ENCODE measurements at regions of chr17 and their contacts with region 1.

Region 1: DNA sequence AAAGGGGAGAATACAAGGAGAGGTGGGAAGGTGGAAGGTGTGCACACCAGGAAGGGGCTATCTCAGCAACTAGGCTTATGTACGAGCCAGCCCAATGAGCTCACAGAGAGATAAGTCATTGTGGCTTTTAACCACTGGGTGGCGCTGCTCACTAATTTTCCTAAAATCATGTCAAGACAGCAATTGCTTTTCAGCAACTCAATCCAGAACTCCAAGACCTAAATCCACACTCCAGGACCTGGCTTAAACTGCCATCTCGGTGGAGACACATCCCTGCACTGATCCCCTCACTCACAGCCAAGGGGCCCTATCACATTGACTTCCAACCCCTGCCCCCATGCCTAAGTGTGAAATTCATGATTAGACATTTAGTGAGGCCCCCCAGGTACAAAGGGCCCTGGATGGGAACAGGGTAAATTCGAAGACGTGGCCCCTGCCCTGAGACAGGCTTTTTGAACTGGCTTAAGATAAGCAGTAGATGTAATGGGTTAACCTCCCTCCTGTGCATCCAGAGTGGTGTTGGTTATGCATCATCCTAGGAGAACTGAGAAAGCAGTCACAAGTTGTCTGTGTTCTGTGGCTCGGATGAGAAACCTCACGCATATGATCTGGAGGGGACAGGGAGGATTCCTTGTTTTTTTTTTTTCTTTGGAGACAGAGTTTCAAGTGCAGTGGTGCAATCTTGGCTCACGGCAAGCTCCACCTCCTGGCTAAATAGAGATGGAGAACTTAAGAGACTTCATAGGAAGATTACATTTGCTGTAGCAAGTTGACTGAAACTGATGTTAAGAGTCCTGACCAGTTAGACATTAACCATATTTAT is 11.5 kb downstream of the CCL16 start:
- DNase-seq: peak; percentile 52 to 64 (median 56)
- H3K4me3 ChIP-seq: no peak overlapping the region
- H3K4me3 Mint-ChIP-seq: peak overlapping the region in 1 of 8 donors; percentile 29
- H3K27ac ChIP-seq: no peak overlapping the region
- H3K27ac Mint-ChIP-seq: no peak overlapping the region
- H3K4me1 ChIP-seq: no peaks in the 10 kb centered on the region
- H3K4me1 Mint-ChIP-seq: peaks cover 0 to 3% (median under 1%) of the 10 kb centered on the region in 4 donors
- H3K27me3 ChIP-seq: no peaks in the 10 kb centered on the region
- H3K27me3 Mint-ChIP-seq: peaks cover 0 to 4% of the 10 kb centered on the region in 2 donors

Region 2: GRCh38 chr17:35849469-35850348 is 120.1 kb before region 1 on chr17:
- CTCF ChIA-PET with region 1: interaction called, 11 read pairs
- POLR2A ChIA-PET with region 1: no interaction called
- intact Hi-C with region 1: no loop called
- DNase-seq: peak; percentile 56 to 65 (median 59)
- H3K4me3 ChIP-seq: no peak overlapping the region
- H3K4me3 Mint-ChIP-seq: peak overlapping the region in 4 of 8 donors; percentile 27 to 51 (median 43)
- H3K27ac ChIP-seq: no peak overlapping the region
- H3K27ac Mint-ChIP-seq: peak overlapping the region; percentile 34 to 79 (median 58)
- H3K4me1 ChIP-seq: peaks cover 10% of the 10 kb centered on the region
- H3K4me1 Mint-ChIP-seq: peaks cover 12 to 17% (median 15%) of the 10 kb centered on the region in 4 donors
- H3K27me3 ChIP-seq: no peaks in the 10 kb centered on the region
- H3K27me3 Mint-ChIP-seq: no peaks in the 10 kb centered on the region

Region 3: GRCh38 chr17:35901651-35902175 is 68.1 kb before region 1 on chr17:
- CTCF ChIA-PET with region 1: no interaction called
- POLR2A ChIA-PET with region 1: no interaction called
- intact Hi-C with region 1: no loop called
- DNase-seq: no peak
- H3K4me3 ChIP-seq: no peak overlapping the region
- H3K4me3 Mint-ChIP-seq: no peak overlapping the region
- H3K27ac ChIP-seq: no peak overlapping the region
- H3K27ac Mint-ChIP-seq: peak overlapping the region in 2 of 7 donors; percentile 77 to 82
- H3K4me1 ChIP-seq: peaks cover 34% of the 10 kb centered on the region
- H3K4me1 Mint-ChIP-seq: peaks cover 18 to 49% (median 34%) of the 10 kb centered on the region in 4 donors
- H3K27me3 ChIP-seq: no peaks in the 10 kb centered on the region
- H3K27me3 Mint-ChIP-seq: no peaks in the 10 kb centered on the region

Region 4: GRCh38 chr17:35953720-35954119 is 16.0 kb before region 1 on chr17:
- CTCF ChIA-PET with region 1: interaction called, 14 read pairs
- POLR2A ChIA-PET with region 1: no interaction called
- intact Hi-C with region 1: no loop called
- DNase-seq: no peak
- H3K4me3 ChIP-seq: no peak overlapping the region
- H3K4me3 Mint-ChIP-seq: no peak overlapping the region
- H3K27ac ChIP-seq: no peak overlapping the region
- H3K27ac Mint-ChIP-seq: no peak overlapping the region
- H3K4me1 ChIP-seq: no peaks in the 10 kb centered on the region
- H3K4me1 Mint-ChIP-seq: peaks cover 0 to 3% (median 0%) of the 10 kb centered on the region in 4 donors
- H3K27me3 ChIP-seq: no peaks in the 10 kb centered on the region
- H3K27me3 Mint-ChIP-seq: peaks cover 7 to 10% of the 10 kb centered on the region in 2 donors

Region 5: DNA sequence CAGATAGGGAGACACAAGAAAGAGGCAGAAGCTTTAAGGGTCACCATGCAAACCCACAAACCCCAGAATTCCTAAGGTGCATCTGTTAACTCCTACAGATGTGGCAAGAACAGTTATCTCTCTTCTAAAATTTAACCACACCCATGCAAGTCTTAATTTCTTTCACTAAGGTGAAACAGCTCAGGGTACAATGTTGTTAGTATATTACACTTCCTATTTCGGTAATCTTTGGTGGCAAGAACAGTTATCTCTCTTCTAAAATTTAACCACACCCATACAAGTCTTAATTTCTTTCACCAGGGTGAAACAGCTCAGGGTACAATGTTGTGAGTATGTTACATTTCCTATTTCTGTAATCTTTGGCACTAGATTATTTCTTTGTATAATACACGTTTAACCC is 41.4 kb after region 1 on chr17:
- CTCF ChIA-PET with region 1: no interaction called
- POLR2A ChIA-PET with region 1: no interaction called
- intact Hi-C with region 1: no loop called
- DNase-seq: no peak
- H3K4me3 ChIP-seq: no peak overlapping the region
- H3K4me3 Mint-ChIP-seq: no peak overlapping the region
- H3K27ac ChIP-seq: no peak overlapping the region
- H3K27ac Mint-ChIP-seq: no peak overlapping the region
- H3K4me1 ChIP-seq: no peaks in the 10 kb centered on the region
- H3K4me1 Mint-ChIP-seq: no peaks in the 10 kb centered on the region
- H3K27me3 ChIP-seq: no peaks in the 10 kb centered on the region
- H3K27me3 Mint-ChIP-seq: peaks cover 2 to 13% of the 10 kb centered on the region in 2 donors

Region 6: DNA sequence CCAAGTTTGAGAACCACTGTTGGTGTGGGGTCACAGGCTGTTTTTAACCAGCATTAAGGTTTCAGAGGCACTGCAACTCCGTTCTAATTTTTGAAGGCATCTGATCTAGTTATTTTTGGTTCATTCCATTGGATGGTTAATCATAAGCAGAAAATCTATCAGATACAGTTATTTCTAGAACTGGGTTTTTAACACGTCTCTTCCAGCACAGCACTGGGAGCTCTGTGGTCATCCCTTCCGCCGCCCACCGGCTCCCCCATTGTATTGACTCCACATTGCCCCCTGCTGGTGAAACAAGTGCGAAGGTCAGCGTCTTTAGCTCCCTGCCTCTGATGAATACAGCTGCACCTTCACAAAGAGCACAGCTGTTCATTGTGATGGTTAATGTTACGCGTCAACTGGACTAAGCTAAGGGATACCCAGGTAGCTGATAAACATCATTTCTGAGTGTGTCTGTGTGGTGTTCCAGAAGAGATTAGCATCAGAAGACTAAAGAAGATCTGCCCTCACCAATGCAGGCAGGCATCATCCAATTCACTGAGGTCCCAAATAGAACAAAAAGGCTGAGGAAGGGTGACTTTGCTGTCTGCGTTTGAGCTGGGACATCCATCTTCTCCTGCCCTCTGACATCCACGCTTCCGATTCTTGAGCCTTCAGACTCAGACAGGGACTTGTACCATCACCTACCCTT is 102.8 kb after region 1 on chr17:
- CTCF ChIA-PET with region 1: interaction called, 13 read pairs
- POLR2A ChIA-PET with region 1: no interaction called
- intact Hi-C with region 1: loop called (anchors 1 kb)
- DNase-seq: peak; percentile 28 to 44 (median 37)
- H3K4me3 ChIP-seq: no peak overlapping the region
- H3K4me3 Mint-ChIP-seq: peak overlapping the region in 3 of 8 donors; percentile 24 to 60 (median 27)
- H3K27ac ChIP-seq: no peak overlapping the region
- H3K27ac Mint-ChIP-seq: peak overlapping the region in 1 of 7 donors; percentile 4
- H3K4me1 ChIP-seq: no peaks in the 10 kb centered on the region
- H3K4me1 Mint-ChIP-seq: peaks cover 3 to 9% (median 5%) of the 10 kb centered on the region in 4 donors
- H3K27me3 ChIP-seq: no peaks in the 10 kb centered on the region
- H3K27me3 Mint-ChIP-seq: no peaks in the 10 kb centered on the region

Region 7: GRCh38 chr17:36148559-36149295 is 179.0 kb after region 1 on chr17:
- CTCF ChIA-PET with region 1: interaction called, 22 read pairs
- POLR2A ChIA-PET with region 1: no interaction called
- intact Hi-C with region 1: loop called (anchors 1 kb)
- DNase-seq: peak; percentile 44 to 66 (median 57)
- H3K4me3 ChIP-seq: no peak overlapping the region
- H3K4me3 Mint-ChIP-seq: peak overlapping the region in 1 of 8 donors; percentile 64
- H3K27ac ChIP-seq: no peak overlapping the region
- H3K27ac Mint-ChIP-seq: no peak overlapping the region
- H3K4me1 ChIP-seq: no peaks in the 10 kb centered on the region
- H3K4me1 Mint-ChIP-seq: peaks cover 0 to 3% (median under 1%) of the 10 kb centered on the region in 4 donors
- H3K27me3 ChIP-seq: no peaks in the 10 kb centered on the region
- H3K27me3 Mint-ChIP-seq: peaks cover 9 to 26% of the 10 kb centered on the region in 2 donors

Region 8: DNA sequence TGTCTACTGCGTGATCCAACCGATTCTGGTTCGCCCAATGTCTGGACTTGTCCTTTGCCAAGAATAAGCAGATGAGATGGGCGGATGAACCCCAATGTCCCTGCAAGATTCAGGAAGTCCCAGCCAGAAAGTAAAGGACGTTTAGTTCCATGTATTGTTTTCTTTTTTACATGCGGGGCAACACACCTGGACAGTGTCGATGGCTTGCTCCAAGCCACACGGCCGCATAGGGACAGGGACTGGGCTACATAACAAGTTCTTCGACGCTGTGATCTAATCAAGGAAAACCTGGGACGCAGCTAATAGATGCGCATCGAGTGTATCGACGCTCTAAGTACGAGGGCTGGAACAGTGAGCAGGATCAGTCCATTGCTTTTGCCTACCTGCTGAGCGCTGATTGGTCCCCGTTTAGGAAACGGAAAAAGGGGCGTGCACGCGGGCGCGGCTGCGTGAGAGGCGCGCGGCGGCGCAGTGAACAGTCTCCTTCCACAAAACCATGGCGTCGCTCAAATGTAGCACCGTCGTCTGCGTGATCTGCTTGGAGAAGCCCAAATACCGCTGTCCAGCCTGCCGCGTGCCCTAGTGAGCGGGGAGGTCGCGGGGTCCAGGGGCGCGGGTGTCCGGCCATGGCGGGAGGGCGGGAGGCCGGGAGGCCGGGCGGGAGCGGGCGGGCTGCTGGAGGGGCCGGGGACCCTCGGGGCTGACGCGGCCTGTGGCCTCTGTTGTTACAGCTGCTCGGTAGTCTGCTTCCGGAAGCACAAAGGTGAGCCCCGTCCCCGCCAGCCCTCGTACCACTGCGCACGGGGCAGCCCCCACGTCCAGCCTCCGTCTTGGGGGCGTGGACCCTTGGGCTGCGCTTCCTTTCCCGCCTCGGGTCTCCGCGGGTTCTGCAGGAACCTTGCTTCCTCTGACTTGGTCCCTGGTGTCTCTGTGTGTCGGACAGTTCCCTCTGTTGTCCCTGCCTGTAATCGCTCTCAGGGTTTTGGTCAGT is 516.7 kb after region 1 on chr17 and contains the start of gene ZNHIT3:
- CTCF ChIA-PET with region 1: interaction called, 4 read pairs
- POLR2A ChIA-PET with region 1: no interaction called
- intact Hi-C with region 1: loop called (anchors 1 kb)
- DNase-seq: peak; percentile 91 to 95 (median 91)
- H3K4me3 ChIP-seq: peak within 1 kb of the TSS; percentile 72 to 91
- H3K4me3 Mint-ChIP-seq: peak within 1 kb of the TSS; percentile 97 to 100 (median 99)
- H3K27ac ChIP-seq: peak within 1 kb of the TSS; percentile 70
- H3K27ac Mint-ChIP-seq: peak within 1 kb of the TSS; percentile 85 to 100 (median 99)
- H3K4me1 ChIP-seq: peaks cover 65% of the 10 kb centered on the region
- H3K4me1 Mint-ChIP-seq: peaks cover 28 to 82% (median 46%) of the 10 kb centered on the region in 4 donors
- H3K27me3 ChIP-seq: peaks cover 10% of the 10 kb centered on the region
- H3K27me3 Mint-ChIP-seq: peaks cover 9% of the 10 kb centered on the region in 2 donors
- total RNA-seq, gene ZNHIT3: 66.6 to 68.3 TPM